Activated B cell treated with CpG ODN at 0.5 μM for 24 hours (primary cell): ENCODE measurements at regions of chr6 and their contacts with region 1.

Region 1: DNA sequence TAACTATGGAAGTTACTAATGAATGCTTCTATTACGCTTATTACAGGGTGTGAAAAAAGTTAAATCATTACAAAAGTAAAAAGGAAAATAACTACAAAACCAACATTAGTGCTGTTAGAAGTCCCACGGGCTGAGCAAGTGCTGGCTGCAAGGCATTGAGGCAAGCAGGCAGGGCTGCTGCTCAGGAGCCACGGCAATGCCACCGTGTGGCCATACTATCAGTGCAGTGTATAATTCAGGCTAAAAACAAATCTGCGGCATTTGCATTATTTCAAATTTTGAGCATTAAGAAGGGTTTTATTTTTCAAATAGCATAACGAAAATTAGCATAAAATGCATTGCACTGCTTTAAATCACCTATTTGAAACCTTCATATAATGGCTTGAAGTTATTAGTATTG is 17.1 kb downstream of the IFNGR1 start:
- DNase-seq: no peak
- ATAC-seq: peak; percentile 89
- H3K4me3 Mint-ChIP-seq: peak overlapping the region; percentile 24
- H3K27ac Mint-ChIP-seq: peak overlapping the region; percentile 65
- H3K4me1 Mint-ChIP-seq: peaks cover 37% of the 10 kb centered on the region
- H3K27me3 Mint-ChIP-seq: no peaks in the 10 kb centered on the region
- CTCF ChIP-seq: no peak

Region 2: DNA sequence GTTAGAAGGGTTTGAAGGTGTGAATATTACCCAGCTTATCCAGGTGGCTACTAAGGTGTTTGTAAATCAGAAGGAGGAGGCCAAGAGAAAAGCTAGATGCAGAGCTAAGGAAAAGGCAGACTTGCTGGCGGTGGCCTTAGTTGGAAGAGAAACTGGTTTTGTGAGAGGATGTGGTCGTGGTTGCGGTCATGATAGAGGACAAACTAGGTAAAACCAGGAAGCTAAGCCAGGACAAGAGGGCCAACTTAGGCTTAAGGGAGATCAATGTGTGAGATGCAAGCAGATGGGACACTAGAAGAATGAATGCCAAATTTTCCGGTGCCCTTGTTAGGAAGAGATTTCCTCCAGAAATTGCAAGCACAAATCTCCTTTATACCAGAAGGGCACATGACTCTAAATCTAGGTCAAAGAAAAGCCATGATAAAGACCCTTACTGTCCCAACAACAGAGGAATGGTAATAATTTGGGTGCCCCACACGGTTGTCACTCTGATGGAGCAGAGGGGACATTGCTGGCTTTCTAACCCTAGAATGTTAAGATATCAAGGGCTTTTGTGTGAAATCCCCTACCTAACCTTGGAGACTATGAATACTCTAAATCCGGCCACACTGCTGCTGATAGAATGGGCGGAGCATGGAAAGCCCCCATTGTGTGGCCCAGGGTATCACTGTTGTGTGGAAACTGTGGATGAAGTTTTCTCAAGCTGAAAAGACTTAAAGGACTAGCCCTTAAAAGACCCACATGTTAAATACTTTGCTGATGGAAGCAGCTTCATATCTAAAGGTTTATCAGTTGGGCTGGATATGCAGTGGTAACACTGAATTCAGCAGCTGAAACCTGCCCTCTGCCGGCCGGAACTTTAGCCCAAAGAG is 36.5 kb before region 1 on chr6:
- CTCF ChIA-PET with region 1: interaction called, 10 read pairs
- POLR2A ChIA-PET with region 1: no interaction called
- intact Hi-C with region 1: loop called (anchors 1 kb)
- DNase-seq: peak; percentile 28
- ATAC-seq: peak; percentile 81
- H3K4me3 Mint-ChIP-seq: peak overlapping the region; percentile 45
- H3K27ac Mint-ChIP-seq: peak overlapping the region; percentile 92
- H3K4me1 Mint-ChIP-seq: peaks cover 75% of the 10 kb centered on the region
- H3K27me3 Mint-ChIP-seq: no peaks in the 10 kb centered on the region
- CTCF ChIP-seq: no peak

Region 3: GRCh38 chr6:137181891-137182653 is 20.0 kb before region 1 on chr6:
- CTCF ChIA-PET with region 1: no interaction called
- POLR2A ChIA-PET with region 1: no interaction called
- intact Hi-C with region 1: loop called (anchors 2 kb)
- DNase-seq: no peak
- ATAC-seq: no peak
- H3K4me3 Mint-ChIP-seq: no peak overlapping the region
- H3K27ac Mint-ChIP-seq: no peak overlapping the region
- H3K4me1 Mint-ChIP-seq: peaks cover 16% of the 10 kb centered on the region
- H3K27me3 Mint-ChIP-seq: no peaks in the 10 kb centered on the region
- CTCF ChIP-seq: no peak

Region 4: GRCh38 chr6:137233911-137234863 is 32.1 kb after region 1 on chr6:
- CTCF ChIA-PET with region 1: no interaction called
- POLR2A ChIA-PET with region 1: no interaction called
- intact Hi-C with region 1: no loop called
- DNase-seq: no peak
- ATAC-seq: peak; percentile 76
- H3K4me3 Mint-ChIP-seq: peak overlapping the region; percentile 73
- H3K27ac Mint-ChIP-seq: peak overlapping the region; percentile 80
- H3K4me1 Mint-ChIP-seq: peaks cover 70% of the 10 kb centered on the region
- H3K27me3 Mint-ChIP-seq: no peaks in the 10 kb centered on the region
- CTCF ChIP-seq: no peak

Region 5: GRCh38 chr6:138287144-138287955 is 1085.3 kb after region 1 on chr6:
- CTCF ChIA-PET with region 1: no interaction called
- POLR2A ChIA-PET with region 1: no interaction called
- intact Hi-C with region 1: no loop called
- DNase-seq: no peak
- ATAC-seq: peak; percentile 28
- H3K4me3 Mint-ChIP-seq: no peak overlapping the region
- H3K27ac Mint-ChIP-seq: no peak overlapping the region
- H3K4me1 Mint-ChIP-seq: no peaks in the 10 kb centered on the region
- H3K27me3 Mint-ChIP-seq: peaks cover 7% of the 10 kb centered on the region
- CTCF ChIP-seq: no peak